Activated naive CD4-positive, alpha-beta T cell treated with anti-CD3 and anti-CD28 coated beads for 36 hours (primary cell): ENCODE measurements at regions of chr15 and their contacts with region 1.

Region 1: GRCh38 chr15:38440353-38441129 is 13.4 kb upstream of the FAM98B start:
- DNase-seq: peak; percentile 64
- H3K4me3 Mint-ChIP-seq: no peak overlapping the region
- H3K27ac Mint-ChIP-seq: no peak overlapping the region
- H3K4me1 Mint-ChIP-seq: peaks cover 4% of the 10 kb centered on the region
- H3K27me3 Mint-ChIP-seq: no peaks in the 10 kb centered on the region

Region 2: GRCh38 chr15:38117781-38118180 is 322.8 kb before region 1 on chr15:
- CTCF ChIA-PET with region 1: no interaction called
- intact Hi-C with region 1: no loop called
- DNase-seq: no peak
- H3K4me3 Mint-ChIP-seq: no peak overlapping the region
- H3K27ac Mint-ChIP-seq: no peak overlapping the region
- H3K4me1 Mint-ChIP-seq: no peaks in the 10 kb centered on the region
- H3K27me3 Mint-ChIP-seq: peaks cover 7% of the 10 kb centered on the region

Region 3: DNA sequence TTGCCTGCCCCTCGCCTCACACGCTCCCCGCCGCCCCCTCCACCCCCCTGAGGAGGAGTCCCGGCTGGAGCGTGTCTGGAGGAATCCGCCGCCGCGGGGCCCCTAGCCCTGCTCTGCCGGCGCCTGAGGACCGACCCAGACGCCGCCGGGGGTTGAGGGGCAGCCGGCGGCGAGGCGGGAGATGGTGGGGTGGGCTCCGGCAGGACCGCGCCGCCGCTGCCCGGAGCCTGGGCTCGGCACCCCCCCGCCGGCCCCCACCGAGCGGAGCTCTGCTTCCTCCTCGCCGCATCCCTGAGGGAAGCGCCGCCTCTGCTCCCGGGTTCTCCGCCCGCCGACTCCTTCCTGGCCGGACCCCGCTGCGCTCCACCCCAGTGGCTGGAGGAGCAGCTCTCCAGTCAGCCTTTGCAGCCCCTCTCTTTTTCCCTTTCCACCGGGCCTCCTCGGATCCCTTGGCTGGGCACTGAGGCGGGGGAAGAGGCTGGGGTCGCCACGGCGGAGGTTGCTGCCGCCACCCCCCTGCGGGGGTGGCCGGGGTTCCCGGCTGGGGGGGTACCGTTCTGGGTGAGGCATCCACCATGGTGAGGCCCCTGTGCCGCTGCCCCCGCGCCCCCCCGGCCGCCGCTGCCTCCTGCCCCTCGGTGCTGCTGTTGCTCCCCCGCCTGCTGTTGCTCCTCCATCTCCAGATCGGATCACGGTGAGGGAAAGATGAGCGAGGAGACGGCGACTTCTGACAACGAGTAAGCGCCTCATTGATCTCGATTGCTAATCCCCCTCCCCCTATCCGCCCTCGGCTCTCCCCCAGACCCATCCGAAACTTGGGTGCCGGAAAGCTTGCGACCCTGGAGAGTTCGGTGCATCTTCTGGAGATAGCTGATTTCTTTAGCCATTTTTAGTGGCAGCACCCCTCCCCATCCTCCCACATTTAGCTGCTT is 187.8 kb before region 1 on chr15 and contains the start of gene SPRED1:
- CTCF ChIA-PET with region 1: no interaction called
- intact Hi-C with region 1: loop called (anchors 5 kb)
- DNase-seq: peak; percentile 30
- H3K4me3 Mint-ChIP-seq: peak within 1 kb of the TSS; percentile 84
- H3K27ac Mint-ChIP-seq: no peak within 1 kb of the TSS
- H3K4me1 Mint-ChIP-seq: peaks cover 19% of the 10 kb centered on the region
- H3K27me3 Mint-ChIP-seq: peaks cover 13% of the 10 kb centered on the region
- total RNA-seq, gene SPRED1: 0.62 to 0.74 TPM

Region 4: GRCh38 chr15:38453971-38454695 is 13.6 kb after region 1 on chr15 and contains the start of gene FAM98B:
- CTCF ChIA-PET with region 1: interaction called, 43 read pairs
- intact Hi-C with region 1: no loop called
- DNase-seq: peak; percentile 92
- H3K4me3 Mint-ChIP-seq: peak within 1 kb of the TSS; percentile 94
- H3K27ac Mint-ChIP-seq: peak within 1 kb of the TSS; percentile 88
- H3K4me1 Mint-ChIP-seq: peaks cover 28% of the 10 kb centered on the region
- H3K27me3 Mint-ChIP-seq: no peaks in the 10 kb centered on the region
- total RNA-seq, gene FAM98B: 42.0 to 47.4 TPM

Region 5: GRCh38 chr15:38474155-38474757 is 33.7 kb after region 1 on chr15:
- CTCF ChIA-PET with region 1: interaction called, 6 read pairs
- intact Hi-C with region 1: loop called (anchors 1 kb)
- DNase-seq: peak; percentile 30
- H3K4me3 Mint-ChIP-seq: no peak overlapping the region
- H3K27ac Mint-ChIP-seq: peak overlapping the region; percentile 55
- H3K4me1 Mint-ChIP-seq: peaks cover 4% of the 10 kb centered on the region
- H3K27me3 Mint-ChIP-seq: no peaks in the 10 kb centered on the region

Region 6: DNA sequence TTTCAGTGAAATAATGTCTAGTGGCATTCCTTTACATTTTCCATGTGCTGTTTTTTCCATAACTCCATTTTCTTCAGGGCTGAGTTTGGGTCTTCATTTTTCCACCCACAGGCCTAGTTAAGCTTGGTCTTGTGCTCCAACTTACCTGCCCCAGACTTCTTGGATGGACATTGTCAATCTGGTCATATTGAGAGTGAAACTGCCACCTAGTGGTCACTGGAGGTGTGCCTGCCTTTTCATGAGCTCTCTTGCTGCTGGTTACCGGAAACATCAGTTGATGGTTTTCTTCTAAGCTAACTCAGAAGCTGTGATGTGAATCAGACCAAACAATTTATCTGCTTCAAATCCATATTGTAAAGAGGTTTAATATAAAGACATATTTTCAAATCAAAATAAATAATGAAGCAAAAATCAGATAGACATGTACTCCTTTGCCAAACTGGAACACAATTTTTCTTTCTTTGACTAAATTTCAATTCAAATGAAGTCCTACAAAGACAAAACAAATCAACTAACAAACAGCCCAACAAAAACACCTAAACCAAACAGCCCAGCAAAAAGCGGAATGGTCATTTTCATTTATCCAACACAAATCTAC is 259.2 kb after region 1 on chr15:
- CTCF ChIA-PET with region 1: interaction called, 306 read pairs
- intact Hi-C with region 1: loop called (anchors 1 kb)
- DNase-seq: peak; percentile 83
- H3K4me3 Mint-ChIP-seq: no peak overlapping the region
- H3K27ac Mint-ChIP-seq: peak overlapping the region; percentile 41
- H3K4me1 Mint-ChIP-seq: peaks cover 47% of the 10 kb centered on the region
- H3K27me3 Mint-ChIP-seq: no peaks in the 10 kb centered on the region